B cell (primary cell): ENCODE measurements at regions of chr2 and their contacts with region 1.

Region 1: GRCh38 chr2:238060542-238061314 is at the start of gene SCLY:
- DNase-seq: peak; percentile 98
- ATAC-seq: peak; percentile 97
- H3K4me3 ChIP-seq: peak within 1 kb of the TSS; percentile 66 to 95 (median 88)
- H3K4me3 Mint-ChIP-seq: peak within 1 kb of the TSS; percentile 87
- H3K27ac ChIP-seq: peak within 1 kb of the TSS; percentile 48 to 90
- H3K27ac Mint-ChIP-seq: peak within 1 kb of the TSS; percentile 87
- H3K4me1 ChIP-seq: peaks cover 15% of the 10 kb centered on the region in 2 donors
- H3K4me1 Mint-ChIP-seq: peaks cover 22% of the 10 kb centered on the region
- H3K27me3 ChIP-seq: no peaks in the 10 kb centered on the region
- H3K27me3 Mint-ChIP-seq: peaks cover 15% of the 10 kb centered on the region
- CTCF ChIP-seq: no peak
- total RNA-seq, gene SCLY: 36.6 and 42.4 TPM in 2 replicates

Region 2: DNA sequence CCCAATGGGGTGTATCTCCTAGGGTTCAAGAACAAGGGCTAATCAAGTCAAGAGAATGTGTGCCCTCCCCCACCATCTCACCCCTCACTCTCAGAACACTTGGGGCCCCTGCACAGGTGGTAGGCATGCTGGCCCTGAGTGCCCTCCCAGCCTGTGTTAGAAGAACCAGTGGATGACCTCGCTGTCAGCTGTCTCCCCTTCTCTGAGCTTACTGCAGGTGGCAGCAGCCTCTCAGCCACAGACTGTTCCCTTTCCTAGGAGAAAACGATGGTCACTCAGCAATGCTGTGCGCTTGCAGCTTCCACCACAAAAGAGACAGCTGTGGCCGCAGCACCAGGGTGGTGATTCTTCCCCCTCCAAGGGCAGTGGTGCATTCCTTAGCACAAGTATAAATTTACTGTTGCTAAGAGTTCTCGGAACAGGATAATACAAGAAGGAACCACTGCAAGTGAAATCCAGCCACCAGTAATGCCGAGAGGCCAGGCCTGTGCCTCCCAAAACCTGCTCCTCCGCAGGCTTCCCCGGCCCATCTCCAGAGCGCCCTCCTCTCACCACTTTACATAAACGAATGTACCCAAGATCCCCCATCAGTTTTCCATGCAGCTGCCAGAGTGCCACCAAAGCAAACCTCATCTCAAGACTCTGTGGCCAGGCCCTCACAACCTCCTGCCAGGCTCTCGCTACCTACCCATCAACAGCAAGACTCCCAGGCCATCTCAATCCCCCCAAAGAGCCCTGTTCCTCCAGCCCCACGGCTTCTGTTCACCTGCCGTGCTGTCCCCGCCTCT is 202.2 kb before region 1 on chr2:
- CTCF ChIA-PET with region 1: no interaction called
- POLR2A ChIA-PET with region 1: no interaction called
- intact Hi-C with region 1: loop called (anchors 2 kb)
- DNase-seq: peak; percentile 43
- ATAC-seq: peak; percentile 80
- H3K4me3 ChIP-seq: no peak overlapping the region
- H3K4me3 Mint-ChIP-seq: peak overlapping the region; percentile 62
- H3K27ac ChIP-seq: no peak overlapping the region
- H3K27ac Mint-ChIP-seq: no peak overlapping the region
- H3K4me1 ChIP-seq: no peaks in the 10 kb centered on the region
- H3K4me1 Mint-ChIP-seq: peaks cover 17% of the 10 kb centered on the region
- H3K27me3 ChIP-seq: peaks cover 0 to 37% (median 13%) of the 10 kb centered on the region in 4 experiments
- H3K27me3 Mint-ChIP-seq: peaks cover 44% of the 10 kb centered on the region
- CTCF ChIP-seq: peak; percentile 43

Region 3: DNA sequence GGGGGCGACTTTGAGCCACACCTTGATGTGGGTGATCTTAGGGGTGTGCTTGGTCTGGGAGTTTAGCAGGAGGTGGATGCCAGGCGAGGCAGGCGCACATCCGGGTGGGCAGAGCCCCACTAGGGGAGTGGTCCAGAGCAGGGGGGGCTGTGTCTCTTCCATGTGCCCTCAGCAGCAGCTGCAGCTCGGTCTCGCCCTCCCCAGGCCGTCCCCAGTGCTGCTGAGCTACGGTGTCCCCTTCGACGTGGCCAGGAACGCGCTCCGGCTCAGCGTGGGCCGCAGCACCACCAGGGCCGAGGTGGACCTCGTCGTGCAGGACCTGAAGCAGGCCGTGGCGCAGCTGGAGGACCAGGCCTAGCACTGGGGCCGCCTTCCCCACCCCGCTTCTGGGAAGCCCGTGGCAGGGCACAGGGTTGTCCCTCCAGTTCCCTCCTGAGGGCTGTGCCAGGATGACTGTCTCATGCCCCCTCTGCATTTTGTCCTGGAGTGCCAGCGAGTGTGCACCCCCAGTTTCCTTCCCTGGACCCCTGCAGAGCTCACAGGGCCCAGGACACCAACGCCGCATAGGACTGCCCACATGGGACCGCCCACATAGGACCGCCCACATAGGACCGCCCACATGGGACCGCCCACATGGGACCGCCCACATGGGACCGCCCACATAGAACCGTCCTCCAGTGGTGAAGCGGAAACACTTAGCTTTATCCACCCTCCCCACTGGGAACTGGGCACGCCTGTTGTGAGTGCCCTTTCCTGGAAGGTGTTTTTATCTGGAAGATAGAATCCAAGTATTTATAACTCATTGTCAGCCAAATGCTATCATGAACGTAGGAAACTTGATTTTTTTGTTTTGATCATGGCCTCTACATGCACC is 37.5 kb after region 1 on chr2:
- CTCF ChIA-PET with region 1: interaction called, 3 read pairs
- POLR2A ChIA-PET with region 1: interaction called, 6 read pairs
- intact Hi-C with region 1: loop called (anchors 1 kb)
- DNase-seq: peak; percentile 73
- ATAC-seq: peak; percentile 97
- H3K4me3 ChIP-seq: peak overlapping the region in 2 of 5 experiments; percentile 26 to 41
- H3K4me3 Mint-ChIP-seq: peak overlapping the region; percentile 84
- H3K27ac ChIP-seq: no peak overlapping the region
- H3K27ac Mint-ChIP-seq: peak overlapping the region; percentile 88
- H3K4me1 ChIP-seq: peaks cover 15 to 22% of the 10 kb centered on the region in 2 donors
- H3K4me1 Mint-ChIP-seq: peaks cover 18% of the 10 kb centered on the region
- H3K27me3 ChIP-seq: no peaks in the 10 kb centered on the region
- H3K27me3 Mint-ChIP-seq: no peaks in the 10 kb centered on the region
- CTCF ChIP-seq: no peak

Region 4: GRCh38 chr2:238106686-238107524 is 46.2 kb after region 1 on chr2:
- CTCF ChIA-PET with region 1: no interaction called
- POLR2A ChIA-PET with region 1: no interaction called
- intact Hi-C with region 1: loop called (anchors 2 kb)
- DNase-seq: peak; percentile 37
- ATAC-seq: peak; percentile 1
- H3K4me3 ChIP-seq: peak overlapping the region in 4 of 5 experiments; percentile 26 to 62 (median 34)
- H3K4me3 Mint-ChIP-seq: peak overlapping the region; percentile 94
- H3K27ac ChIP-seq: peak overlapping the region; percentile 55 to 71
- H3K27ac Mint-ChIP-seq: peak overlapping the region; percentile 92
- H3K4me1 ChIP-seq: peaks cover 35 to 45% of the 10 kb centered on the region in 2 donors
- H3K4me1 Mint-ChIP-seq: peaks cover 29% of the 10 kb centered on the region
- H3K27me3 ChIP-seq: no peaks in the 10 kb centered on the region
- H3K27me3 Mint-ChIP-seq: no peaks in the 10 kb centered on the region
- CTCF ChIP-seq: peak; percentile 60

Region 5: GRCh38 chr2:238128534-238129001 is 67.8 kb after region 1 on chr2:
- CTCF ChIA-PET with region 1: no interaction called
- POLR2A ChIA-PET with region 1: no interaction called
- intact Hi-C with region 1: no loop called
- DNase-seq: no peak
- ATAC-seq: no peak
- H3K4me3 ChIP-seq: no peak overlapping the region
- H3K4me3 Mint-ChIP-seq: no peak overlapping the region
- H3K27ac ChIP-seq: no peak overlapping the region
- H3K27ac Mint-ChIP-seq: no peak overlapping the region
- H3K4me1 ChIP-seq: peaks cover 0 to 5% of the 10 kb centered on the region in 2 donors
- H3K4me1 Mint-ChIP-seq: no peaks in the 10 kb centered on the region
- H3K27me3 ChIP-seq: no peaks in the 10 kb centered on the region
- H3K27me3 Mint-ChIP-seq: no peaks in the 10 kb centered on the region
- CTCF ChIP-seq: no peak

Region 6: DNA sequence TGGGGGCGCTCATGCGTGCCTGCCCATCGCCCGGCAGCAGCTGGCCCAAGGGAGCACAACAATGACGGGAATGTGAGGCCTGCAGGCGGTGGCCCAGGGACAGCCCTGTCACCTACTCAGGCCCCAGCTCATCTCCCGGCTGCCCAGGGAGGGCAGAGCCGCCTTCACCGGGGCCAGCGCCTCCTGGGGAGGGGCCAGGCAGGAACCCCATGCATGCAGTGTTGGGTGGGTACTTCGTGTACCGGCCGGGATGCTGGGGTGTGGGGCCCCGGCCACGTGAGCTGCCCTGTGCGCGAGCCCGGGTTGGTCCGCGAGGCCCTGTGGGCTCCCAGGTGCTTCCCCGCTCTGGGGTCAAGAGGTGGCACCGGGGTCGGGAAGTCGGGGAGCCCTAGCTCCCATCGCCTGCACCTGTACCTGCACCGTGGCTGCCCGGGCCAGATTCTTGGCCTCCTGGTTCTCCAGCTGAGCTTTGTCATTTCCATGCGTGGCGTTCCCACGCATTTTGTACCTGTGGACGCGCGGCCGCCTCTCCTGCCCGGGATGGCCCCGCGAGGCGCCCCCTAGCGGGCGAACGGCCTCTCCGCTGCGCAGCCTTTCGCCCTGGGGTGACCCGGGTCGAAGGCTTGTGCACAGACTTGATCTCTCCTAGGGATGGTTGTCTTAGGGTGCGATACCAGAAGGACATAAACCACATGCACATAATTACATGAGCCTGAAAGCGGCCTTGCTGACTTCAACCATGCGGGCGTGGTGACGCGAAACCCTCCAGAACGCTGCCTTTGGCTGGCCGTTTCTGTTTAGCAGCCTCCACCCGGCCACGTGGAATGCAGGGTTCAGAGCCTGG is 78.7 kb after region 1 on chr2:
- CTCF ChIA-PET with region 1: no interaction called
- POLR2A ChIA-PET with region 1: no interaction called
- intact Hi-C with region 1: no loop called
- DNase-seq: peak; percentile 48
- ATAC-seq: peak; percentile 46
- H3K4me3 ChIP-seq: peak overlapping the region in 2 of 5 experiments; percentile 23 to 33
- H3K4me3 Mint-ChIP-seq: peak overlapping the region; percentile 50
- H3K27ac ChIP-seq: no peak overlapping the region
- H3K27ac Mint-ChIP-seq: no peak overlapping the region
- H3K4me1 ChIP-seq: peaks cover 16 to 26% of the 10 kb centered on the region in 2 donors
- H3K4me1 Mint-ChIP-seq: peaks cover 12% of the 10 kb centered on the region
- H3K27me3 ChIP-seq: peaks cover 0 to 7% (median 1%) of the 10 kb centered on the region in 4 experiments
- H3K27me3 Mint-ChIP-seq: no peaks in the 10 kb centered on the region
- CTCF ChIP-seq: peak; percentile 61

Region 7: GRCh38 chr2:238203094-238203972 is 142.6 kb after region 1 on chr2 and contains the start of gene ILKAP:
- CTCF ChIA-PET with region 1: no interaction called
- POLR2A ChIA-PET with region 1: interaction called, 3 read pairs
- intact Hi-C with region 1: loop called (anchors 1 kb)
- DNase-seq: peak; percentile 93
- ATAC-seq: peak; percentile 97
- H3K4me3 ChIP-seq: peak within 1 kb of the TSS; percentile 46 to 72 (median 58)
- H3K4me3 Mint-ChIP-seq: peak within 1 kb of the TSS; percentile 86
- H3K27ac ChIP-seq: peak within 1 kb of the TSS; percentile 78 to 93
- H3K27ac Mint-ChIP-seq: peak within 1 kb of the TSS; percentile 91
- H3K4me1 ChIP-seq: peaks cover 23 to 31% of the 10 kb centered on the region in 2 donors
- H3K4me1 Mint-ChIP-seq: peaks cover 47% of the 10 kb centered on the region
- H3K27me3 ChIP-seq: peaks cover 0 to 8% (median 0%) of the 10 kb centered on the region in 4 experiments
- H3K27me3 Mint-ChIP-seq: no peaks in the 10 kb centered on the region
- CTCF ChIP-seq: no peak
- total RNA-seq, gene ILKAP: 98.6 and 102 TPM in 2 replicates

Region 8: DNA sequence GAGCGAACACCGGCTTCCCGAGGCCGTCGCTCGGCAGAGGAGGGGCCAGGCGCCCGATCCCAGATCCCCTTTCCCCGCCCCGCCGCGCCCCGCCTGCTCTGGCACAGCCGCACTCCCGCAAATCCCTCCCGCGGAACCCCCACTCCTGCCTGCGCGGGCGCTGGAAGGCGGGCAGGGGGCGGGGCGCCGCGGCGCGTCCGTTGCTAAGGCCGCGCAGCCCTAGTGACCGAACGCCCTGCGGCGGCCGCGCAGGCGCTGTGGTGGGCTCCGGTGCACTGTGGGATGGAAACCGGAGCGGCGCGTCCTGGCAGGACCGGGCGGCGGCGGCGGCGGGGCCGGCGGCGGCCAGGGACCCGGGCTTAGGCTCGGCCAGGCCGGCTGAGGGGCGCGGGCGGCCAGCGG is 259.5 kb after region 1 on chr2 and contains the start of gene TRAF3IP1:
- CTCF ChIA-PET with region 1: no interaction called
- POLR2A ChIA-PET with region 1: no interaction called
- intact Hi-C with region 1: loop called (anchors 1 kb)
- DNase-seq: peak; percentile 90
- ATAC-seq: peak; percentile 98
- H3K4me3 ChIP-seq: peak within 1 kb of the TSS; percentile 19 to 74 (median 53)
- H3K4me3 Mint-ChIP-seq: peak within 1 kb of the TSS; percentile 85
- H3K27ac ChIP-seq: no peak within 1 kb of the TSS
- H3K27ac Mint-ChIP-seq: peak within 1 kb of the TSS; percentile 70
- H3K4me1 ChIP-seq: peaks cover 12 to 16% of the 10 kb centered on the region in 2 donors
- H3K4me1 Mint-ChIP-seq: peaks cover 15% of the 10 kb centered on the region
- H3K27me3 ChIP-seq: peaks cover 0 to 3% (median 0%) of the 10 kb centered on the region in 4 experiments
- H3K27me3 Mint-ChIP-seq: peaks cover 9% of the 10 kb centered on the region
- CTCF ChIP-seq: no peak
- total RNA-seq, gene TRAF3IP1: 15.2 and 15.5 TPM in 2 replicates

Region 9: GRCh38 chr2:238426568-238427434 is 366.1 kb after region 1 on chr2 and contains the start of gene ASB1:
- CTCF ChIA-PET with region 1: no interaction called
- POLR2A ChIA-PET with region 1: no interaction called
- intact Hi-C with region 1: loop called (anchors 2 kb)
- DNase-seq: peak; percentile 87
- ATAC-seq: peak; percentile 84
- H3K4me3 ChIP-seq: peak within 1 kb of the TSS; percentile 73 to 93 (median 81)
- H3K4me3 Mint-ChIP-seq: peak within 1 kb of the TSS; percentile 94
- H3K27ac ChIP-seq: peak within 1 kb of the TSS; percentile 81 to 92
- H3K27ac Mint-ChIP-seq: peak within 1 kb of the TSS; percentile 89
- H3K4me1 ChIP-seq: peaks cover 19 to 26% of the 10 kb centered on the region in 2 donors
- H3K4me1 Mint-ChIP-seq: peaks cover 43% of the 10 kb centered on the region
- H3K27me3 ChIP-seq: no peaks in the 10 kb centered on the region
- H3K27me3 Mint-ChIP-seq: no peaks in the 10 kb centered on the region
- CTCF ChIP-seq: no peak
- total RNA-seq, gene ASB1: 50.7 and 51.7 TPM in 2 replicates